CD8-positive, alpha-beta T cell (primary cell): ENCODE measurements at regions of chr10 and their contacts with region 1.

Region 1: GRCh38 chr10:110610308-110610774 is 33.8 kb upstream of the RBM20 start:
- DNase-seq: peak in 8 of 9 experiments; percentile 19 to 73 (median 56)
- ATAC-seq: peak; percentile 77
- H3K4me3 ChIP-seq: no peak overlapping the region
- H3K4me3 Mint-ChIP-seq: no peak overlapping the region
- H3K27ac ChIP-seq: no peak overlapping the region
- H3K27ac Mint-ChIP-seq: no peak overlapping the region
- H3K4me1 ChIP-seq: no peaks in the 10 kb centered on the region
- H3K4me1 Mint-ChIP-seq: peaks cover 10% of the 10 kb centered on the region
- H3K27me3 ChIP-seq: no peaks in the 10 kb centered on the region
- H3K27me3 Mint-ChIP-seq: no peaks in the 10 kb centered on the region
- CTCF ChIP-seq: peak; percentile 84

Region 2: DNA sequence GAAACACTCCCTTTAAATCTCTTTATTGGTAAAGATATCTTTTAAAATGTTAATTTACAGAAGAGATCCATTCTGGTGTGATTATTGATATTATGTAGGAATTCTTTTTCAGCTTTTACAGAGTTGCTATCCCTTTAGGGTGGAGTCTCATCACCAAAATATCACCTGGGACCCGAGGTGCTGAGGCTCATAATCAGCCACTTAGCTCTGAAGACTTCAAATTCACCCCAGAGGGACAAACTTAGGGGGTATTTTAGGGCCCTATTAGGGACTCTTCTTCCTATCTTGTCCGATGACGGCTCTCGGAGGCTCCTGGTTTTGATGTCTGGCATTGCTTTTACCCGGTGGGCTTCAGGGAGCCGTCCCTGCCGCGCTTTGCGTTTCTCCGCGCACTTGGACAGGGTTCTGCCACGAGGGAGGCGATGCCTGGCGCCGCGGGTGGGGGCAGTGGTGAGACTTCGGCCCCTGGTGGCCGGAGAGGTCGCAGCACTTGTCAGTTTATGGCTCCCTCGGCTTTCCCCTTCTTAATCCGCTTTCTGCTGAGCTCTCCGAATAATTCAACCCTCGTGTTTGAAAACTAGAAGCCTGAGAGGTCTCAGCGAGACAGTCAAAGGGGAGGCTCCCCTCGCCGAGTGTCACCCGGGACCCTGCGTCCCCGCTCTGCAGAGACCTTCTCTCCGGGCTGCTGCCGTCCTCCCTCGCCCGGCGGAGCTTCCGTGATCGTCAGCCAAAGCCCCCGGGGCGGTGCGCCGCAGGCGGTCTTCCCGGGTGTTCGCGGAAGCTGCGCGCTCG is 61.6 kb after region 1 on chr10:
- CTCF ChIA-PET with region 1: interaction called, 9 read pairs
- POLR2A ChIA-PET with region 1: no interaction called
- intact Hi-C with region 1: loop called in 1 of 2 experiments (anchors 1 kb)
- DNase-seq: peak; percentile 36 to 82 (median 69)
- ATAC-seq: peak; percentile 85
- H3K4me3 ChIP-seq: peak overlapping the region; percentile 66 to 76
- H3K4me3 Mint-ChIP-seq: peak overlapping the region; percentile 91
- H3K27ac ChIP-seq: peak overlapping the region; percentile 55 to 69
- H3K27ac Mint-ChIP-seq: peak overlapping the region; percentile 91
- H3K4me1 ChIP-seq: peaks cover 4% of the 10 kb centered on the region
- H3K4me1 Mint-ChIP-seq: peaks cover 4% of the 10 kb centered on the region
- H3K27me3 ChIP-seq: no peaks in the 10 kb centered on the region
- H3K27me3 Mint-ChIP-seq: no peaks in the 10 kb centered on the region
- CTCF ChIP-seq: peak; percentile 58

Region 3: DNA sequence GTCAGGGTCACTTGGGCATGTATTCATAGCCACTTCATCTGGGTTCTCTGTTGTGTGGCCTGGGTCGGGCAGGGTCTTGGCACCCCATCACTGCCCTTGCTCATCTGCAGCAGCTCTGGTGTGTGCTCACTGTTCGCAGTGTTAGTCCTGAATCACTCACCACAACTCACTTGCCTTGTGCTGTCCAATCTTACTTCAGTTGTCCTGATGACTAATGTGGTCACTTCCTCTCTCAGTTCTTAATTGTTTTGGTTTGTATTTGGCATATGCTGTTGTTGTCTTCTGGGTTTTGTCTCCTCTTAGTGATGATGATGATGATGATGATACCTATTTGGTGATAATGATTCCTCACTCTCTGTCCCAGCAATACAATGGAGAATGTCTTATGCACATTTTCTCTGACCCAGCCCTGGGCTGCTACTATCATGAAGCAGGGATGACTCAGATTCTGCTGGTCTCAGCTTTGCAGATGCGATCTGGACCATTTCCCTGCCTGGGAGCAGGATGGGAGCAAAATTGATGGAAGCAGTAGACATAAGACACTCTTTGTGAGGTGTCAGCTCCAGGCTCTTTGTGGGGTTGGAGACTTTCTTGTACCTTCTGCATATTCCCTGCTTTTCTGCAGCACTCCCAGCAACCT is 483.5 kb after region 1 on chr10:
- CTCF ChIA-PET with region 1: no interaction called
- POLR2A ChIA-PET with region 1: no interaction called
- intact Hi-C with region 1: loop called in 1 of 2 experiments (anchors 5 kb)
- DNase-seq: no peak
- ATAC-seq: no peak
- H3K4me3 ChIP-seq: no peak overlapping the region
- H3K4me3 Mint-ChIP-seq: no peak overlapping the region
- H3K27ac ChIP-seq: no peak overlapping the region
- H3K27ac Mint-ChIP-seq: no peak overlapping the region
- H3K4me1 ChIP-seq: no peaks in the 10 kb centered on the region
- H3K4me1 Mint-ChIP-seq: no peaks in the 10 kb centered on the region
- H3K27me3 ChIP-seq: no peaks in the 10 kb centered on the region
- H3K27me3 Mint-ChIP-seq: peaks cover 27% of the 10 kb centered on the region
- CTCF ChIP-seq: no peak

Region 4: GRCh38 chr10:111261081-111261615 is 650.8 kb after region 1 on chr10:
- CTCF ChIA-PET with region 1: no interaction called
- POLR2A ChIA-PET with region 1: no interaction called
- intact Hi-C with region 1: loop called in 1 of 2 experiments (anchors 5 kb)
- DNase-seq: no peak
- ATAC-seq: no peak
- H3K4me3 ChIP-seq: no peak overlapping the region
- H3K4me3 Mint-ChIP-seq: no peak overlapping the region
- H3K27ac ChIP-seq: no peak overlapping the region
- H3K27ac Mint-ChIP-seq: no peak overlapping the region
- H3K4me1 ChIP-seq: no peaks in the 10 kb centered on the region
- H3K4me1 Mint-ChIP-seq: no peaks in the 10 kb centered on the region
- H3K27me3 ChIP-seq: no peaks in the 10 kb centered on the region
- H3K27me3 Mint-ChIP-seq: peaks cover 19% of the 10 kb centered on the region
- CTCF ChIP-seq: no peak

Region 5: GRCh38 chr10:112137154-112137987 is 1527.0 kb after region 1 on chr10:
- CTCF ChIA-PET with region 1: interaction called, 3 read pairs
- POLR2A ChIA-PET with region 1: no interaction called
- intact Hi-C with region 1: loop called in 1 of 2 experiments (anchors 2 kb)
- DNase-seq: peak; percentile 17 to 68 (median 55)
- ATAC-seq: peak; percentile 45
- H3K4me3 ChIP-seq: no peak overlapping the region
- H3K4me3 Mint-ChIP-seq: no peak overlapping the region
- H3K27ac ChIP-seq: no peak overlapping the region
- H3K27ac Mint-ChIP-seq: no peak overlapping the region
- H3K4me1 ChIP-seq: no peaks in the 10 kb centered on the region
- H3K4me1 Mint-ChIP-seq: no peaks in the 10 kb centered on the region
- H3K27me3 ChIP-seq: no peaks in the 10 kb centered on the region
- H3K27me3 Mint-ChIP-seq: peaks cover 6% of the 10 kb centered on the region
- CTCF ChIP-seq: peak; percentile 83